Activated CD4-positive, alpha-beta memory T cell treated with anti-CD3 and anti-CD28 coated beads, Interleukin-2, amount 10 ng/mL, durations not matched to agents 7 days and 5 days (primary cell): ENCODE measurements at regions of chr12 and their contacts with region 1.

Region 1: GRCh38 chr12:96399919-96400797 is at the start of gene CDK17:
- DNase-seq: peak; percentile 90
- H3K4me3 Mint-ChIP-seq: peak within 1 kb of the TSS; percentile 94
- H3K27ac Mint-ChIP-seq: peak within 1 kb of the TSS; percentile 94
- H3K4me1 Mint-ChIP-seq: peaks cover 48% of the 10 kb centered on the region
- H3K27me3 Mint-ChIP-seq: no peaks in the 10 kb centered on the region
- total RNA-seq, gene CDK17: 41.5 to 42.5 TPM

Region 2: GRCh38 chr12:96194971-96195844 is 204.9 kb before region 1 on chr12:
- CTCF ChIA-PET with region 1: no interaction called
- POLR2A ChIA-PET with region 1: interaction called, 16 read pairs
- DNase-seq: peak; percentile 78
- H3K4me3 Mint-ChIP-seq: peak overlapping the region; percentile 99
- H3K27ac Mint-ChIP-seq: peak overlapping the region; percentile 99
- H3K4me1 Mint-ChIP-seq: peaks cover 47% of the 10 kb centered on the region
- H3K27me3 Mint-ChIP-seq: no peaks in the 10 kb centered on the region

Region 3: GRCh38 chr12:96237465-96238077 is 162.6 kb before region 1 on chr12:
- CTCF ChIA-PET with region 1: interaction called, 8 read pairs
- POLR2A ChIA-PET with region 1: interaction called, 30 read pairs
- DNase-seq: peak; percentile 68
- H3K4me3 Mint-ChIP-seq: peak overlapping the region; percentile 39
- H3K27ac Mint-ChIP-seq: peak overlapping the region; percentile 56
- H3K4me1 Mint-ChIP-seq: peaks cover 80% of the 10 kb centered on the region
- H3K27me3 Mint-ChIP-seq: no peaks in the 10 kb centered on the region

Region 4: DNA sequence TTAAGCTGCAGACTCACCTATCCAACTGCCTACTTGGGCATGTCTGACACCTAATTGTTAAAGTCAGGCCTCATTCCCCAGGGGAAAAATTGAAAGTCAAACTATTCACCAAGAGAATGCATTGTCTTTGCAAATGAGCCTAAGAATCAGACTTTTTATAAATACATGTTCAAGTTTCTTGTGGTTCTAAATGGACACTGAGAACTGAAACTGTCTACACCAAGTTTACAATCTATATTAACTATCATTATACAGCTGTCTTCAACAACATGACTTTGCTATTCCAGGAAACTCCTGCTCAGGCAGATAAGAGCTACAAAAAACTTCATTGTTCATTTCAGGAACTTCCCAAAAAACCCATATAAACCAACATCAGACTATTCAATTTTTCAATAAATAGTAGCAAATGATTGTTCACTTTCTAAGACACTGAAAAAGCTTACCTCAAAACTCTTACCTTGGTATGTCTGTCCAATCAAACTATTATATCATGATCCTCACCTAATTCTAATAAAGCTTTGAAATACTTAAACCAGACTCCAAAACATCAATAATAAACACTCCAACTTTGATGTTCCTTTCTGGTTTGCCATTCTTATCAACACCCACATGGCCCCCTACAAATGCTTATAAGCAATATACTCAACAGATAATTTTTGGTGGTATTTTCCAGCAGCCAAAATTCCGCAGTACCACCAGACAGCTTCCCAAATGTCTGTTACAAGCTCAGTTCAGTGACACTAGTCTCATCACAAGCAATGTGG is 24.1 kb before region 1 on chr12:
- CTCF ChIA-PET with region 1: interaction called, 26 read pairs
- POLR2A ChIA-PET with region 1: interaction called, 46 read pairs
- DNase-seq: no peak
- H3K4me3 Mint-ChIP-seq: no peak overlapping the region
- H3K27ac Mint-ChIP-seq: no peak overlapping the region
- H3K4me1 Mint-ChIP-seq: peaks cover 64% of the 10 kb centered on the region
- H3K27me3 Mint-ChIP-seq: no peaks in the 10 kb centered on the region

Region 5: GRCh38 chr12:96434107-96434506 is 33.9 kb after region 1 on chr12:
- CTCF ChIA-PET with region 1: interaction called, 20 read pairs
- POLR2A ChIA-PET with region 1: interaction called, 21 read pairs
- DNase-seq: peak; percentile 85
- H3K4me3 Mint-ChIP-seq: peak overlapping the region; percentile 5
- H3K27ac Mint-ChIP-seq: peak overlapping the region; percentile 69
- H3K4me1 Mint-ChIP-seq: peaks cover 34% of the 10 kb centered on the region
- H3K27me3 Mint-ChIP-seq: no peaks in the 10 kb centered on the region

Region 6: DNA sequence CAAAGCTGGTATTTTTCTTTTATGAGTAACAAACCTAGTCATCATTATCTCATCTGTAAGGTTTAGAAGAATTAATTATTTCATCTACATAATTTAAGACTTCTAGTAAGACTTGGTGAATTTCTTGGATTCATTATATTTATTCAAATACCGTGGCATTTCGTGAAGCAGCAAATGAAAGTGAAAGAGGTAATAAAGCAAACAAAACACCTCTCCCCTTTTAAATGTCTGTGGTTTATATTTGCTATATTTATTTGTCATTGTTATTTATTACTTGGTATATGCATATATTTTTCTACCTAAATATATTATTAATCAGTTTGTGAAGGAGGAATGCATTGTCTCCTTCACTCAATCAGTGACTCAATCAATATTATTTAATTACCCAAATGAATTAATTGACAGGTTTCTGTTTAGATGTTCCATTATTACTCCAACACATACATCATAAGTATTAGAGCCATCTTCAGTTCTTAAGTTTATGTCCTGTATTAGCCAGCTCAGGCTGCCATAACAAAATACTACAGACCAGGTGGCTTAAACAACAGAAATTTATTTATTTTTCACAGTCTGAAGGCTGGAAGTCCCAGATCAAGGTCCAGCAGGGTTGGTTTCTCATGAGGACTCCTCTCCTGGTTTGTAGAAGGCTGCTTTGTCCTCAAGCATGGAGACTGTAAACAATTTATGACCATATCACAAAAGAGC is 95.8 kb after region 1 on chr12:
- CTCF ChIA-PET with region 1: interaction called, 7 read pairs
- POLR2A ChIA-PET with region 1: interaction called, 46 read pairs
- DNase-seq: no peak
- H3K4me3 Mint-ChIP-seq: peak overlapping the region; percentile 31
- H3K27ac Mint-ChIP-seq: no peak overlapping the region
- H3K4me1 Mint-ChIP-seq: peaks cover 37% of the 10 kb centered on the region
- H3K27me3 Mint-ChIP-seq: peaks cover 5% of the 10 kb centered on the region